Ovary (tissue), 10 donors: ENCODE measurements at regions of chr16 and their contacts with region 1.

Region 1: GRCh38 chr16:86343027-86343787 is 167.1 kb upstream of the FOXF1 start:
- DNase-seq: peak in 1 of 5 donors; percentile 49
- H3K4me3 ChIP-seq: no peak overlapping the region
- H3K27ac ChIP-seq: no peak overlapping the region
- H3K4me1 ChIP-seq: no peaks in the 10 kb centered on the region
- H3K27me3 ChIP-seq: no peaks in the 10 kb centered on the region
- CTCF ChIP-seq: no peak
- EP300 ChIP-seq: no peak
- POLR2A ChIP-seq: no peak

Region 2: GRCh38 chr16:86509759-86510464 is 166.7 kb after region 1 on chr16:
- intact Hi-C with region 1: loop called in 1 of 4 experiments (anchors 5 kb)
- DNase-seq: peak; percentile 17 to 52 (median 46)
- H3K4me3 ChIP-seq: peak overlapping the region; percentile 59
- H3K27ac ChIP-seq: peak overlapping the region; percentile 7 to 31
- H3K4me1 ChIP-seq: peaks cover 12% of the 10 kb centered on the region
- H3K27me3 ChIP-seq: peaks cover 16% of the 10 kb centered on the region
- CTCF ChIP-seq: no peak
- EP300 ChIP-seq: no peak
- POLR2A ChIP-seq: no peak